ENCODE measurements at regions of chrX and their contacts with region 1.

Region 1: GRCh38 chrX:44305921-44306735 is 37.3 kb downstream of the EFHC2 start:
- DNase-seq: no peak
- ATAC-seq: no peak
- H3K4me3 ChIP-seq: no peak overlapping the region
- H3K4me3 Mint-ChIP-seq: no peak overlapping the region
- H3K27ac ChIP-seq: no peak overlapping the region
- H3K27ac Mint-ChIP-seq: peak overlapping the region in 1 of 9 donors; percentile 62
- H3K4me1 ChIP-seq: no peaks in the 10 kb centered on the region
- H3K4me1 Mint-ChIP-seq: peaks cover 0 to 5% (median 0%) of the 10 kb centered on the region in 7 donors
- H3K27me3 ChIP-seq: no peaks in the 10 kb centered on the region
- H3K27me3 Mint-ChIP-seq: no peaks in the 10 kb centered on the region

Region 2: GRCh38 chrX:43836435-43837184 is 469.5 kb before region 1 on chrX:
- CTCF ChIA-PET with region 1: interaction called, 3 read pairs
- POLR2A ChIA-PET with region 1: no interaction called
- intact Hi-C with region 1: loop called in 1 of 2 experiments (anchors 2 kb)
- DNase-seq: peak in 5 of 9 donors; percentile 8 to 39 (median 20)
- ATAC-seq: no peak
- H3K4me3 ChIP-seq: no peak overlapping the region
- H3K4me3 Mint-ChIP-seq: no peak overlapping the region
- H3K27ac ChIP-seq: no peak overlapping the region
- H3K27ac Mint-ChIP-seq: no peak overlapping the region
- H3K4me1 ChIP-seq: no peaks in the 10 kb centered on the region
- H3K4me1 Mint-ChIP-seq: no peaks in the 10 kb centered on the region
- H3K27me3 ChIP-seq: no peaks in the 10 kb centered on the region
- H3K27me3 Mint-ChIP-seq: peaks cover 0 to 6% (median 0%) of the 10 kb centered on the region in 5 donors

Region 3: DNA sequence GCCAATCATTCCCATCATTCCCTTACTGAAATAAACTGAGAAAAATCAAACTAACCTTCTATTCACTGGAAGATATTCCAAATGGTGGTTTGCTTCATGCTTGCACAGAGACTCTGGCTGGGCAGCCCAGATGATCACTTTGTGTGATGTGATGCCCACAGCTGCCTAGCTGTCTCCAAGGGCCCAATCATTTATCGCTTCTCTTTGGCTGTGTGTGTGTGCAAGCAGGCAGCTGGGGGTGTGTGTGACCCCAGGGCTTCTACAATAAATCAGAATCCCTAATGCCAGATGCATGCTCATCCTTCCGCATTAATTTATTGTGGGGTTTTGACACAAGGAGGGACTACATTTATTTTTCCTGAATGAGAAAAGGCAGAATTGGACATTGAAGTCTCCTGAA is 192.8 kb before region 1 on chrX:
- CTCF ChIA-PET with region 1: no interaction called
- POLR2A ChIA-PET with region 1: no interaction called
- intact Hi-C with region 1: loop called in 1 of 2 experiments (anchors 10 kb)
- DNase-seq: no peak
- ATAC-seq: no peak
- H3K4me3 ChIP-seq: no peak overlapping the region
- H3K4me3 Mint-ChIP-seq: no peak overlapping the region
- H3K27ac ChIP-seq: no peak overlapping the region
- H3K27ac Mint-ChIP-seq: no peak overlapping the region
- H3K4me1 ChIP-seq: no peaks in the 10 kb centered on the region
- H3K4me1 Mint-ChIP-seq: no peaks in the 10 kb centered on the region
- H3K27me3 ChIP-seq: no peaks in the 10 kb centered on the region
- H3K27me3 Mint-ChIP-seq: no peaks in the 10 kb centered on the region

Region 4: GRCh38 chrX:44244008-44244407 is 62.1 kb before region 1 on chrX:
- CTCF ChIA-PET with region 1: interaction called, 23 read pairs
- POLR2A ChIA-PET with region 1: interaction called, 5 read pairs
- intact Hi-C with region 1: loop called in 1 of 2 experiments (anchors 1 kb)
- DNase-seq: peak in 6 of 9 donors; percentile 8 to 51 (median 40)
- ATAC-seq: peak; percentile 46
- H3K4me3 ChIP-seq: no peak overlapping the region
- H3K4me3 Mint-ChIP-seq: peak overlapping the region in 2 of 10 donors; percentile 0 to 6
- H3K27ac ChIP-seq: no peak overlapping the region
- H3K27ac Mint-ChIP-seq: peak overlapping the region in 8 of 9 donors; percentile 5 to 79 (median 52)
- H3K4me1 ChIP-seq: peaks cover 5 to 22% of the 10 kb centered on the region in 2 donors
- H3K4me1 Mint-ChIP-seq: peaks cover 10 to 46% (median 30%) of the 10 kb centered on the region in 7 donors
- H3K27me3 ChIP-seq: no peaks in the 10 kb centered on the region
- H3K27me3 Mint-ChIP-seq: no peaks in the 10 kb centered on the region

Region 5: DNA sequence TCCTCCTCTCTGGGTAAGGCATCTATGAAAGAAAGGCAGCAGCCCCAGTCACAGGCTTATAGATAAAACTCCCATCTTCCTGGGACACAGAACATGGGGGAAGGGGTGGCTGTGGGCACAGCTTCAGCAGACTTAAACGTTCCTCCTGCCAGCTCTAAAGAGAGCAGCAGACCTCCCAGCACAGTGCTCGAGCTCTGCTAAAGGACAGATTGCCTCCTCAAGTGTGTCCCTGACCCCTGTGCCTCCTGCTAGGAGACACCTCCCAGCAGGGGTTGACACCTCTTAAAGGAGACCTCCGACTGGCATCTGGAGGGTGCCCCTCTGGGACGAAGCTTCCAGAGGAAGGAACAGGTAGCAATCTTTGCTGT is 52.6 kb before region 1 on chrX:
- CTCF ChIA-PET with region 1: interaction called, 5 read pairs
- POLR2A ChIA-PET with region 1: no interaction called
- intact Hi-C with region 1: loop called in 1 of 2 experiments (anchors 2 kb)
- DNase-seq: no peak
- ATAC-seq: no peak
- H3K4me3 ChIP-seq: peak overlapping the region; percentile 14
- H3K4me3 Mint-ChIP-seq: peak overlapping the region; percentile 59 to 84 (median 72)
- H3K27ac ChIP-seq: peak overlapping the region; percentile 56
- H3K27ac Mint-ChIP-seq: peak overlapping the region; percentile 80 to 97 (median 91)
- H3K4me1 ChIP-seq: peaks cover 7 to 12% of the 10 kb centered on the region in 2 donors
- H3K4me1 Mint-ChIP-seq: peaks cover 15 to 64% (median 33%) of the 10 kb centered on the region in 7 donors
- H3K27me3 ChIP-seq: no peaks in the 10 kb centered on the region
- H3K27me3 Mint-ChIP-seq: no peaks in the 10 kb centered on the region